CD8-positive, alpha-beta memory T cell (primary cell): ENCODE measurements at regions of chr7 and their contacts with region 1.

Region 1: DNA sequence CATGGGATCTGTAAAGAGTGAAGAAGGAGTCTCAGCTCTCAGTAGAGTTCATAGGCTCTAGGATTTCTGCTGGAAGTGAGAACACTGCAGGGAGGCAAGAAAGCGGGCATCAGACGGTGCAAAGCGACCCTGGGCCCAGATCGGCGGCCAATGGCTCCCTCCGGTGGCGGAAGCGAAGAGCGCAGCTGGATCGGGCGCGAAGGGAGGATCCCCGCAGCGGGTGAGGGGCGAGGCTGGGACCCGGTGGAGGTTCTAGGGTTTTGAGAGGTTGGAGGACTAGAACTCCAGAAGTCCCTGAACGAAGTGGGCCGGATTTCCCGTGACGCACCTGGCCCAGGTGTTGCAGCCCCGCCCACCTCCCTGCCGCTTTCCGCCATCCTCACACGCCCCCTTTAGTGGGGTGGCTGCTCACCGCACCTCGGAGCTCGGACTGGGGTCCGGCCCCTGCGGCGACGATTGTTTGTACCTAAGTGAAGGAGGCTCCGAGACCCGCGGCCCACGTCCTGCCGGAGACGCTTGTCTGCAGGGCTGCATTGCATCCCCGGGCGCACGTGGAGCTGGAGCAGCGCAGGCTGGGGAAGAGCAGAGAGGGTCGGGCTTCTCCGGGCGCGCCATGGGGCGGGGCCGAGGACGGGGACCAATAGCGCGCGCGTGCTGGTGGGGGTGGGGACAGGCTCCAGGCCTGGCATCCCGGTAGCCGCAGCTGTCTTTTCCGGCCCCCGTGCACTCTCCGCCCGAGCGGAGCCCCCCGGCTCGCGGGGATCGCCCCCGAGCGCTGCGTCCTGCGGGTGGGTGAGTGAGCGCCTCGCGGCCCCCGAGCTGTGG is at the start of gene SLC12A9:
- DNase-seq: peak; percentile 81 to 89 (median 84)
- H3K4me3 ChIP-seq: peak within 1 kb of the TSS; percentile 85
- H3K4me3 Mint-ChIP-seq: peak within 1 kb of the TSS; percentile 84 to 96 (median 90)
- H3K27ac ChIP-seq: peak within 1 kb of the TSS; percentile 64
- H3K27ac Mint-ChIP-seq: peak within 1 kb of the TSS; percentile 36 to 98 (median 90)
- H3K4me1 ChIP-seq: peaks cover 17% of the 10 kb centered on the region
- H3K4me1 Mint-ChIP-seq: peaks cover 15 to 33% (median 21%) of the 10 kb centered on the region in 3 donors
- H3K27me3 ChIP-seq: no peaks in the 10 kb centered on the region
- H3K27me3 Mint-ChIP-seq: no peaks in the 10 kb centered on the region
- total RNA-seq, gene SLC12A9: 24.7 to 29.1 TPM

Region 2: DNA sequence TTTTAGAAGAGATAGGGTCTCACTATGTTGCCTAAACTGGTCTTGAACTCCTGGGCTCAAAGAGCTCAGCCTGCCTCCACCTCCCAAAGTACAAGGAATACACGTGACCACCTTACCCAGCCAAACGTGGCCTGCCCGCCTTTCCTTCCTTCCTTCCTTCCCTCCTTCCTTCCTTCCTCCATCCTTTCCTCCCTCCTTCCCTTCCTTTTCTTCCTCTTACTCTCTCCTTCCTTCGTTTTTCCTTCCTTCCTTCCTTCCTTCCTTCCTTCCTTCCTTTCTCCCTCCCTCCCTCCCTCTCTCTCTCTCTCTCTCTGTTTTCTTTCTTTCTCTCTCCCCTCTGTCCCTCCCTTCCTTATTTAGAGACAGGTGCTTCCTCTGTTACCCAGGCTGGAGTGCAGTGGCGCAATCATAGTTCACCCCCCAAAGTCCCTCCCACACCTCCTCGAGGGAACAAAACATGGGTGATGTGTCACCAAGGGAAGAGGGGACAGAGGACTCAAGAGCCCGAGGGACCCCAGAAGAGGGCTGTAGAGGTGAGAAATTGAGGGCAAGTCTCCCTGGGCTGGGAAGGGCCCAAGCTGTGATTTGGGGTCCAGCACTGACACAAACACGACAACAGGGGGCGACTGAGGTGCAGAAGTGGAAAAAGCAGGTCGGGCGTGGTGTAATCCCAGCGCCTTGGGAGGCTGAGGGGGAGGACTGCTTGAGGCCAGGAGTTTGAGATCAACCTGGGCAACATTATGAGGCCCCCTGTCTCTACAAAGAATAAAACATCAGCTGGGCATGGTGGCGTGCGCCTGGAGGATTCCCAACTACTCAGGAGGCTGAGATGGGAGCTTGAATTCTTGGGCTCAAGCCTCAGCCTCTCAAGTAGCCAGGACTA is 53.0 kb before region 1 on chr7:
- CTCF ChIA-PET with region 1: interaction called, 52 read pairs
- POLR2A ChIA-PET with region 1: no interaction called
- DNase-seq: peak; percentile 14 to 63 (median 30)
- H3K4me3 ChIP-seq: no peak overlapping the region
- H3K4me3 Mint-ChIP-seq: no peak overlapping the region
- H3K27ac ChIP-seq: no peak overlapping the region
- H3K27ac Mint-ChIP-seq: peak overlapping the region in 2 of 8 donors; percentile 63 to 78
- H3K4me1 ChIP-seq: no peaks in the 10 kb centered on the region
- H3K4me1 Mint-ChIP-seq: peaks cover 0 to 4% (median 2%) of the 10 kb centered on the region in 3 donors
- H3K27me3 ChIP-seq: no peaks in the 10 kb centered on the region
- H3K27me3 Mint-ChIP-seq: peaks cover 15 to 22% of the 10 kb centered on the region in 2 donors

Region 3: DNA sequence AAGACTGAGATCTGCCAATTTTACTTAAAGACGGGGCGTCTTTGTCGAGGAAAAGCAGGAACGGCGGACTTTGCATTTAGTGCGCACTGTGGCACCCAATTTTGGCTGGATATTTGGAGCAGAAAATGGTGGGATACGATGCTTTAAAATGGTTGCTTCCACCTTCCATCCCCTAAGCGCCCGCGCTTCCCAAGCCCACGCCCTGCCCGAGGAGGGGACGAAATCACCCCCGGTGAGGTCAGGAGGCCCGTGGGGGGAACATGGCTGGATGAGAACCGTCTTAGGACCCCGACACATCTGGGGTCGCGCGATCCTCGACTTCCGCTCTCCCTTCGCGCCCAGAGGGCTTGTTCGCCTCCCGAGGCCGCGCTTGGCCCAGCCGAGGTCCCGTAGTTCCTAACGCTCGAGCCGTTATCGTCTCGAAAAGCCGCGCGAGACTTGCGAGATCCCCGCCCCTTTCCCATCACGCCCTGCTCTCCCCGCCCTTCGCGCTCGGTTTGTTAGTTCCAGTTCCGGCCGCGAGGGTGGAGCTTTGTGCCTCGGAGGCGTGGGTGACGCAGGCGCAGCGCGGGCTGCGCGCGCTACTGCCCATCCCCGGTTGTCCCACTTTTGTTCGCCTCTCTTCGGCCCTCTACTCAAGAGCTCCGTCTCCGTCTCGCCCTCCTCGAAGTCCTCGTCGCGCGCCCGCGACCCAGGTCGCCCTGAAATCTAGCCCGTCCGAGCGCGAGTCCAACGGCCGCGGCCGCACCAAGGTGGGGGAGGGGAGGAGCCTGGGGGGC is 22.5 kb after region 1 on chr7 and contains the start of gene SRRT:
- CTCF ChIA-PET with region 1: interaction called, 7 read pairs
- POLR2A ChIA-PET with region 1: interaction called, 13 read pairs
- DNase-seq: peak; percentile 97 to 98 (median 98)
- H3K4me3 ChIP-seq: peak within 1 kb of the TSS; percentile 84
- H3K4me3 Mint-ChIP-seq: peak within 1 kb of the TSS; percentile 96 to 99 (median 99)
- H3K27ac ChIP-seq: peak within 1 kb of the TSS; percentile 86
- H3K27ac Mint-ChIP-seq: peak within 1 kb of the TSS; percentile 91 to 99 (median 98)
- H3K4me1 ChIP-seq: peaks cover 29% of the 10 kb centered on the region
- H3K4me1 Mint-ChIP-seq: peaks cover 44 to 53% (median 52%) of the 10 kb centered on the region in 3 donors
- H3K27me3 ChIP-seq: no peaks in the 10 kb centered on the region
- H3K27me3 Mint-ChIP-seq: no peaks in the 10 kb centered on the region
- total RNA-seq, gene SRRT: 285 to 290 TPM

Region 4: GRCh38 chr7:100965723-100966541 is 113.7 kb after region 1 on chr7:
- CTCF ChIA-PET with region 1: no interaction called
- POLR2A ChIA-PET with region 1: no interaction called
- DNase-seq: peak; percentile 52 to 74 (median 59)
- H3K4me3 ChIP-seq: peak overlapping the region; percentile 55
- H3K4me3 Mint-ChIP-seq: peak overlapping the region; percentile 29 to 89 (median 83)
- H3K27ac ChIP-seq: no peak overlapping the region
- H3K27ac Mint-ChIP-seq: peak overlapping the region in 2 of 8 donors; percentile 15 to 49
- H3K4me1 ChIP-seq: peaks cover 19% of the 10 kb centered on the region
- H3K4me1 Mint-ChIP-seq: peaks cover 18 to 27% (median 22%) of the 10 kb centered on the region in 3 donors
- H3K27me3 ChIP-seq: peaks cover 44% of the 10 kb centered on the region
- H3K27me3 Mint-ChIP-seq: peaks cover 55 to 64% of the 10 kb centered on the region in 2 donors